ENCODE measurements at regions of chr22 and their contacts with region 1.

Region 1: DNA sequence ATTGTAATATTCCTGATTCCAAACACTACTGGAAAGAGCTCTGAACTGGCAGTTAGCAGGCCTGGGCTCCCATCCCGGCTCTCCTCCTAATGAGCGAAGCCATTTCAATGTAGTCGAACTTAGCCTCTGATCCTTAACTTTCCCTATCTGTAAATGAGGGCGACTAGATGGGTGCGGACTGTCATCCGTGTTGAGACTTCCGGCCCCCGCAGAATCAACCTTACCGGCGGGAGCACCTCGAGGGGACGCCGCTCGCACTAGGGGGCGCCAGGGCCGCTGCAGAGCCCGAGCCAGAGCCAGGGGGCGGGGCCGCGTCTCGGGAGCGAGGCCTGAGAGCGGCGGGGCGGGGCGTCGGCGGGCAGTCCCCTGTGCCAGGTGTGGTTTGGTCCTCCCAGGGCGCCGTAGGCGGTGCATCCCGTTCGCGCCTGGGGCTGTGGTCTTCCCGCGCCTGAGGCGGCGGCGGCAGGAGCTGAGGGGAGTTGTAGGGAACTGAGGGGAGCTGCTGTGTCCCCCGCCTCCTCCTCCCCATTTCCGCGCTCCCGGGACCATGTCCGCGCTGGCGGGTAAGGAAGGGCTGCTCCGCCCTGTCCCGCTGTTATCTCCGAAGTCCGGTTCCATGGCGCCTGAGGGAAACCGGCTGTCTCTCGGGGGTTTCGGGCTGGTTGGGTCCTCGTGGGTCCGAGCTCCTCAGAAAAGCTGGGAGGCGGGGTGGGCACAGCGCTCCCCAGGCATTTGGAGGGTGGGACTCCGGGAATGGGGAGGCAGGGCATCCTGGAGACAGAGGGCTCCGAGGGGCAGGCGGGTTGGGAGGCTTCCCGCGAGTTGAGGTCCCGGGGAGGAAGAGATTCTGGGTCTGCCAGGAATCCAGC is at the start of gene LIMK2:
- DNase-seq: peak; percentile 96
- ATAC-seq: peak; percentile 100
- H3K4me3 ChIP-seq: peak within 1 kb of the TSS; percentile 76 to 97 (median 80)
- H3K4me3 Mint-ChIP-seq: peak within 1 kb of the TSS; percentile 89
- H3K27ac ChIP-seq: peak within 1 kb of the TSS; percentile 57 to 81
- H3K27ac Mint-ChIP-seq: peak within 1 kb of the TSS; percentile 89
- H3K4me1 ChIP-seq: peaks cover 23 to 29% of the 10 kb centered on the region in 2 donors
- H3K4me1 Mint-ChIP-seq: peaks cover 36% of the 10 kb centered on the region
- H3K27me3 ChIP-seq: no peaks in the 10 kb centered on the region
- H3K27me3 Mint-ChIP-seq: no peaks in the 10 kb centered on the region
- CTCF ChIP-seq: peak; percentile 89
- total RNA-seq, gene LIMK2: 16.3 and 20.2 TPM in 2 replicates

Region 2: GRCh38 chr22:31093086-31093850 is 118.8 kb before region 1 on chr22:
- CTCF ChIA-PET with region 1: no interaction called
- POLR2A ChIA-PET with region 1: no interaction called
- intact Hi-C with region 1: no loop called
- DNase-seq: no peak
- ATAC-seq: no peak
- H3K4me3 ChIP-seq: no peak overlapping the region
- H3K4me3 Mint-ChIP-seq: no peak overlapping the region
- H3K27ac ChIP-seq: no peak overlapping the region
- H3K27ac Mint-ChIP-seq: no peak overlapping the region
- H3K4me1 ChIP-seq: peaks cover 10 to 27% of the 10 kb centered on the region in 2 donors
- H3K4me1 Mint-ChIP-seq: peaks cover 11% of the 10 kb centered on the region
- H3K27me3 ChIP-seq: no peaks in the 10 kb centered on the region
- H3K27me3 Mint-ChIP-seq: no peaks in the 10 kb centered on the region
- CTCF ChIP-seq: no peak

Region 3: DNA sequence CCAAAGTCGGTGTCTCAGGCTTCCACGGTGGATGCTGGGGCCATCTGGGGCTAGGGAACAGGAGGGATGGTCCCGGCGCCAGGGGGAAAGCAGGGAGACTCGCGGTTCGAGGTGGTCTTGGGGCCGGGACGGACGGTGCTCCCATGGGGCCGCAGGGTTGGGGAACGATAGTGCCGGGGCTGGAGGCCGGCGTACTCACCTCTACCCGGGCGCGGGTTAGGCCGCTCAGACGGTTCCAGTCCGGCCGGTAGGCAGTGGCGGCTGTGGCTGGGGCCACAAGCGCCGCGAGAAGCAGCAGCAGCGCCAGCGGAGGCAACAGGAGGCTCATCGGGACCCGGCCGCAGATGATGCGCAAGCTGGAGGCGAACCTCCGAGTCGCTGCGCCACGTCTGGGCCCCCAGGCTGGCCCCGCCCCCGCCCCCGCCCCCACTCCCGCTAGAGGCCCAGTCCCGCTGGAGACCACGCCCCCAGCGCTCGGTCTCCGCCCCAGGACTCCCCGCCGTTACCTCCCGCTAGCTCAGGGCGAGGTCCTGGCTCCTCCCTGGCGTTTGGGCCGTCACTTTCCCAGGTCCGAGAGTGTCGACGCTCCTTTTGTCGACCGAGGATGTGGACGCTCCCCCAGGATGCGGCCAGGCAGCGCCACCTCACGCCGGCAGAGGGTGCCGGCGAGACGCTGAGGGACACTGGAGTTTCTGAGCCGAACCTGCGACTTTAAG is 104.8 kb before region 1 on chr22 and contains the start of gene SELENOM:
- CTCF ChIA-PET with region 1: interaction called, 4 read pairs
- POLR2A ChIA-PET with region 1: interaction called, 7 read pairs
- intact Hi-C with region 1: loop called (anchors 1 kb)
- DNase-seq: peak; percentile 90
- ATAC-seq: peak; percentile 97
- H3K4me3 ChIP-seq: peak within 1 kb of the TSS; percentile 42 to 91 (median 72)
- H3K4me3 Mint-ChIP-seq: peak within 1 kb of the TSS; percentile 96
- H3K27ac ChIP-seq: peak within 1 kb of the TSS; percentile 37 to 57
- H3K27ac Mint-ChIP-seq: peak within 1 kb of the TSS; percentile 86
- H3K4me1 ChIP-seq: peaks cover 16 to 17% of the 10 kb centered on the region in 2 donors
- H3K4me1 Mint-ChIP-seq: peaks cover 22% of the 10 kb centered on the region
- H3K27me3 ChIP-seq: no peaks in the 10 kb centered on the region
- H3K27me3 Mint-ChIP-seq: no peaks in the 10 kb centered on the region
- CTCF ChIP-seq: peak; percentile 77
- total RNA-seq, gene SELENOM: 18.4 and 23.6 TPM in 2 replicates

Region 4: GRCh38 chr22:31170971-31171370 is 41.1 kb before region 1 on chr22:
- CTCF ChIA-PET with region 1: no interaction called
- POLR2A ChIA-PET with region 1: no interaction called
- intact Hi-C with region 1: no loop called
- DNase-seq: no peak
- ATAC-seq: no peak
- H3K4me3 ChIP-seq: no peak overlapping the region
- H3K4me3 Mint-ChIP-seq: no peak overlapping the region
- H3K27ac ChIP-seq: no peak overlapping the region
- H3K27ac Mint-ChIP-seq: no peak overlapping the region
- H3K4me1 ChIP-seq: no peaks in the 10 kb centered on the region
- H3K4me1 Mint-ChIP-seq: peaks cover 42% of the 10 kb centered on the region
- H3K27me3 ChIP-seq: no peaks in the 10 kb centered on the region
- H3K27me3 Mint-ChIP-seq: no peaks in the 10 kb centered on the region
- CTCF ChIP-seq: no peak

Region 5: GRCh38 chr22:31223786-31224191 is 11.7 kb after region 1 on chr22:
- CTCF ChIA-PET with region 1: interaction called, 56 read pairs
- POLR2A ChIA-PET with region 1: no interaction called
- intact Hi-C with region 1: loop called (anchors 1 kb)
- DNase-seq: no peak
- ATAC-seq: no peak
- H3K4me3 ChIP-seq: no peak overlapping the region
- H3K4me3 Mint-ChIP-seq: no peak overlapping the region
- H3K27ac ChIP-seq: no peak overlapping the region
- H3K27ac Mint-ChIP-seq: no peak overlapping the region
- H3K4me1 ChIP-seq: peaks cover 13 to 34% of the 10 kb centered on the region in 2 donors
- H3K4me1 Mint-ChIP-seq: peaks cover 31% of the 10 kb centered on the region
- H3K27me3 ChIP-seq: no peaks in the 10 kb centered on the region
- H3K27me3 Mint-ChIP-seq: no peaks in the 10 kb centered on the region
- CTCF ChIP-seq: no peak

Region 6: GRCh38 chr22:31272522-31273446 is 60.7 kb after region 1 on chr22:
- CTCF ChIA-PET with region 1: interaction called, 102 read pairs
- POLR2A ChIA-PET with region 1: no interaction called
- intact Hi-C with region 1: loop called (anchors 1 kb)
- DNase-seq: peak; percentile 67
- ATAC-seq: peak; percentile 49
- H3K4me3 ChIP-seq: no peak overlapping the region
- H3K4me3 Mint-ChIP-seq: no peak overlapping the region
- H3K27ac ChIP-seq: no peak overlapping the region
- H3K27ac Mint-ChIP-seq: no peak overlapping the region
- H3K4me1 ChIP-seq: peaks cover 0 to 3% of the 10 kb centered on the region in 2 donors
- H3K4me1 Mint-ChIP-seq: no peaks in the 10 kb centered on the region
- H3K27me3 ChIP-seq: no peaks in the 10 kb centered on the region
- H3K27me3 Mint-ChIP-seq: no peaks in the 10 kb centered on the region
- CTCF ChIP-seq: peak; percentile 72

Region 7: GRCh38 chr22:31399211-31400028 is 187.3 kb after region 1 on chr22 and contains the start of gene DRG1:
- CTCF ChIA-PET with region 1: no interaction called
- POLR2A ChIA-PET with region 1: no interaction called
- intact Hi-C with region 1: loop called (anchors 1 kb)
- DNase-seq: peak; percentile 95
- ATAC-seq: peak; percentile 99
- H3K4me3 ChIP-seq: peak within 1 kb of the TSS; percentile 79 to 88 (median 85)
- H3K4me3 Mint-ChIP-seq: peak within 1 kb of the TSS; percentile 98
- H3K27ac ChIP-seq: peak within 1 kb of the TSS; percentile 60 to 89
- H3K27ac Mint-ChIP-seq: peak within 1 kb of the TSS; percentile 95
- H3K4me1 ChIP-seq: peaks cover 13 to 17% of the 10 kb centered on the region in 2 donors
- H3K4me1 Mint-ChIP-seq: peaks cover 21% of the 10 kb centered on the region
- H3K27me3 ChIP-seq: no peaks in the 10 kb centered on the region
- H3K27me3 Mint-ChIP-seq: peaks cover 2% of the 10 kb centered on the region
- CTCF ChIP-seq: no peak
- total RNA-seq, gene DRG1: 58.9 and 77.7 TPM in 2 replicates

Region 8: DNA sequence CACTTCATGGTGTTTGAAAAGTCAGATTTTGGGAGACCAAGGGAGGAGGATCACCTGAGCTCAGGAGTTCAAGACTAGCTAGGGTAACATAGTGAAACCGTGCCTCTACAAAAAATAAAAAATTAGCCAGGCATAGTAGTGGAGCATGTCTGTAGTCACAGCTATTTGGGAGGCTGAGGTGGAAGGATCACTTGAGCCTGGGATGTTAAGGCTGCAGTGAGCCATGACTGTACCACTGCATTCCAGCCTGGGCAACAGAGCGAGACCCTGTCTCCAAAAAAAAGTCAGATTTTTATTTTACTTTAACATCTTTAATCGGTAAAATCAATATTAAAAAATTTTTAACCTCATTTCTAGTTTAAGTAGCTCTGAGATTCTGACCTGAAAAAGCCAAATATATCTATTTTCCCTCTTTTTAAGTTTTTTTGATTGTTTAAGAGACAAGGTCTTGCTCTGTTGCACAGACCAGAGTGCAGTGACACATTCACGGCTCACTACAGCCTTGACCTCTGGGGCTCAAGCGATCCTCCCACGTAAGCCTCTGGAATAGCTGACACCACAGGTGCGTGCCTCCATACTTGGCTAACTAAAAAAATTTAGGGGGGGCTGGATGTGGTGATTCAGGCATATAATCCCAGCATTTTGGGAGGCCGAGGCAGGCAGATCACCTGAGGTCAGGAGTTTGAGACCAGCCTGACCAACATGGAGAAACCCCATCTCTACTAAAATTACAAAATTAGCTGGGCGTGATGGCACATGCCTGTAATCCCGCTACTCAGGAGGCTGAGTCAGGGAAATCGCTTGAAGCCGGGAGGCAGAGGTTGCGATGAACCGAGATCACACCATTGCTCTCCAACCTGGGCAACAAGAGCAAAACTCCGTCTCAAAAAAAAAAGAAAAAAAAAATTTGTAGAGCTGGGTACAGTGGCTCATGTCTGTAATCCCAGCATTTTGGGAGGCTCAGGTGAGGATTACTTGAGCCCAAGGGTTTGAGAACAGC is 332.7 kb after region 1 on chr22:
- CTCF ChIA-PET with region 1: no interaction called
- POLR2A ChIA-PET with region 1: no interaction called
- intact Hi-C with region 1: no loop called
- DNase-seq: no peak
- ATAC-seq: no peak
- H3K4me3 ChIP-seq: no peak overlapping the region
- H3K4me3 Mint-ChIP-seq: no peak overlapping the region
- H3K27ac ChIP-seq: no peak overlapping the region
- H3K27ac Mint-ChIP-seq: no peak overlapping the region
- H3K4me1 ChIP-seq: no peaks in the 10 kb centered on the region
- H3K4me1 Mint-ChIP-seq: no peaks in the 10 kb centered on the region
- H3K27me3 ChIP-seq: no peaks in the 10 kb centered on the region
- H3K27me3 Mint-ChIP-seq: no peaks in the 10 kb centered on the region
- CTCF ChIP-seq: no peak

Region 9: DNA sequence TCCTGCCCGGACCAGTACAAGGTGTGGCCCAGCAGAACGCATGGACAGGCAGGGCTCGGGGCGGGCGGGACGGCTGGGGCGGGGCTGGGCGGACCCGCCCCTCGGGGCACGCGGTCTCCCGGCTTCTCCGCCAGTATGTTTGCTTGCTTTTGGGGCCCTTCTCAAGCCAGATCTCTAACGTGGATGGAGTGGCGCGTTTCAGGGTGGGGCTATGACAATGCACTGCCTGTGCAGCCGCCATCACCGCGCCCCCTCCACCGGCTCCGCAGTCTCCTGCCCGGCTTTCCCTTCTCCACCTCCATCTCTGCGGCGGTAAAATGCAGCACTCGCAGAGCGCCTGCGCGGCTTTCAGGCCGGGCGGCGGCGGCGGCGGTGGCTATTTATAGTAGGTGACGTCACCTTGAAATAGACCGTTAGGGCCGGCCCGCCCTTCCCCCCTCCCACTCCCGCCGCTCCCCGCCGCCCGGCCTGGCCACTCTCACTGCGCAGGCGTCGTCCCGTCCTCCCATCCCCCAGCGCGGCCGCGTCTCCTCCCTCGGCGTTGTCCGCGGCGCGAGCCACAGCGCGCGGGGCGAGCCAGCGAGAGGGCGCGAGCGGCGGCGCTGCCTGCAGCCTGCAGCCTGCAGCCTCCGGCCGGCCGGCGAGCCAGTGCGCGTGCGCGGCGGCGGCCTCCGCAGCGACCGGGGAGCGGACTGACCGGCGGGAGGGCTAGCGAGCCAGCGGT is 732.0 kb after region 1 on chr22 and contains the start of gene YWHAH:
- CTCF ChIA-PET with region 1: no interaction called
- POLR2A ChIA-PET with region 1: no interaction called
- intact Hi-C with region 1: loop called (anchors 10 kb)
- DNase-seq: peak; percentile 96
- ATAC-seq: peak; percentile 85
- H3K4me3 ChIP-seq: peak within 1 kb of the TSS; percentile 67 to 78 (median 75)
- H3K4me3 Mint-ChIP-seq: no peak within 1 kb of the TSS
- H3K27ac ChIP-seq: peak within 1 kb of the TSS; percentile 82 to 85
- H3K27ac Mint-ChIP-seq: peak within 1 kb of the TSS; percentile 97
- H3K4me1 ChIP-seq: peaks cover 29 to 31% of the 10 kb centered on the region in 2 donors
- H3K4me1 Mint-ChIP-seq: peaks cover 18% of the 10 kb centered on the region
- H3K27me3 ChIP-seq: no peaks in the 10 kb centered on the region
- H3K27me3 Mint-ChIP-seq: no peaks in the 10 kb centered on the region
- CTCF ChIP-seq: no peak
- total RNA-seq, gene YWHAH: 46.6 and 51.1 TPM in 2 replicates